PC-3 (cell line): ENCODE measurements at regions of chr1 and their contacts with region 1.

Region 1: DNA sequence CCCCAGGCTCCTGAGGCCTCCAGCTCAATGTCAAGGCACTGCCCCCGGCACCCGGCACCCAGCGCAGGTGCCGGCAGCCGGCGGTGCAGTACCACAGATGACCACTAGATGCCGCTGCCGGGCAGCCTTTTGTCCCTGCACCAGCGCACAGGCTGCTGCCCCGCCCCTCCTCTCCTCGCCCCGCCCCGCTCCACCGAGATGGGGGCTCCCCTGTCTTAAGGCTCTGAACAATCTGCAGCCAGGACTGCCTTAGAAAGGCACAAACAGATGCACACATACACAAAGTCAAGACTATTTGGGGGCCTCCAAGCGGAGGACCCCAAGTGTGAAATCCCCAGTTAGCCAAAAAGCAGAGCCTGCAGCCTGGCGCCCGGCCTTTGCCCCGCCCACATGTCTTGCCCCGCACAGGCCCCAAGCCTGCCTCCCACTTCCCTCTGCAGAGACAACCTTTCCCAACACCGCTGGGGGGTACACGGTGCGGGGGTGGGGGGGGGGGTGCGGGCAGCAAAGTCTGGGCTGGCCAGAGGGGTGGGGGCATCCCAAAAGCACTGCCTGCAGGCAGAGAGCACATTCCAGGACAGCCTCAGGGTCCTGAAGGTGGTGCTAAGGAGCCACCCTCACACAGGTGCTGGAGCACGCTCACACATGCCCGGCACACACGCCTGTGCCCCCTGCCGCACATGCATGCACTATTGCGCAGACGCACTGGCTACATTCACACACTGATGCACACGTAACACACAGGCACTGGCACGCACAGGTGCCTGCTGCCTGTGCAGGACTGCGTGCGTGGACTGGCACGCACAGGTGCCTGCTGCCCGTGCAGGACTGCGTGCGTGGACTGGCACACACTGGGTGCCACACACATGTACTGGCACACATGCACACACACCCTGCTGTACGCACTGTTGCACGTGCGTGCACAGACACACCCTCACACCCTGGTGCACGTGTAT is 37.1 kb downstream of the ARHGEF16 start:
- DNase-seq: peak; percentile 90
- ATAC-seq: peak; percentile 61
- H3K4me3 ChIP-seq: peak overlapping the region; percentile 33; the same call in 1 of the 2 replicates
- H3K27ac ChIP-seq: no peak overlapping the region
- H3K4me1 ChIP-seq: peaks cover 27% of the 10 kb centered on the region
- H3K27me3 ChIP-seq: no peaks in the 10 kb centered on the region
- CTCF ChIP-seq: peak; percentile 98

Region 2: GRCh38 chr1:3369446-3370076 is 122.0 kb before region 1 on chr1:
- CTCF ChIA-PET with region 1: no interaction called
- POLR2A ChIA-PET with region 1: no interaction called
- intact Hi-C with region 1: no loop called
- DNase-seq: peak; percentile 46
- ATAC-seq: peak; percentile 52
- H3K4me3 ChIP-seq: no peak overlapping the region
- H3K27ac ChIP-seq: no peak overlapping the region
- H3K4me1 ChIP-seq: no peaks in the 10 kb centered on the region
- H3K27me3 ChIP-seq: peaks cover 92% of the 10 kb centered on the region
- CTCF ChIP-seq: no peak

Region 3: DNA sequence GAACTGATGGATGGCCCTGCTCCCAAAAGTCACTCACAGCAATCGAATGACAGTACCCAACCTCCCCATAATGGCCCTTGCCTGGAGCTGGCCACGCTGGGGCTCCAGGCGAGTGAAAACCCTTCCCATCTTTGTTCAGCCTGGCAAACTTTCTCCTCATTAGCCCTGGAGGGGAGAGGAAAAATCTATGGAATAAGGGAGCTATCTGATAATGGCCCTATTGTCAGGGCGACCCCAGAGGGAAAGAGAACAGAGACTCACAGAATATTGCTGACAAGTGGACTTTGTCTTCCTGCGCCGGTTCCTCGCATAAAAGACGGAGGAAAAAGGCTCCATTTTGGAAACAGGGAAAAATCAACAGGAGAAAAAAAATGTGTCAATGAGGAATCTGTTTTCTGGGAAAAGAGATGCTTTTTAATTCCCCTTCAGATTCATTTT is 50.1 kb before region 1 on chr1:
- CTCF ChIA-PET with region 1: no interaction called
- POLR2A ChIA-PET with region 1: no interaction called
- intact Hi-C with region 1: no loop called
- DNase-seq: no peak
- ATAC-seq: no peak
- H3K4me3 ChIP-seq: no peak overlapping the region
- H3K27ac ChIP-seq: no peak overlapping the region
- H3K4me1 ChIP-seq: peaks cover 12% of the 10 kb centered on the region
- H3K27me3 ChIP-seq: peaks cover 56% of the 10 kb centered on the region
- CTCF ChIP-seq: no peak

Region 4: DNA sequence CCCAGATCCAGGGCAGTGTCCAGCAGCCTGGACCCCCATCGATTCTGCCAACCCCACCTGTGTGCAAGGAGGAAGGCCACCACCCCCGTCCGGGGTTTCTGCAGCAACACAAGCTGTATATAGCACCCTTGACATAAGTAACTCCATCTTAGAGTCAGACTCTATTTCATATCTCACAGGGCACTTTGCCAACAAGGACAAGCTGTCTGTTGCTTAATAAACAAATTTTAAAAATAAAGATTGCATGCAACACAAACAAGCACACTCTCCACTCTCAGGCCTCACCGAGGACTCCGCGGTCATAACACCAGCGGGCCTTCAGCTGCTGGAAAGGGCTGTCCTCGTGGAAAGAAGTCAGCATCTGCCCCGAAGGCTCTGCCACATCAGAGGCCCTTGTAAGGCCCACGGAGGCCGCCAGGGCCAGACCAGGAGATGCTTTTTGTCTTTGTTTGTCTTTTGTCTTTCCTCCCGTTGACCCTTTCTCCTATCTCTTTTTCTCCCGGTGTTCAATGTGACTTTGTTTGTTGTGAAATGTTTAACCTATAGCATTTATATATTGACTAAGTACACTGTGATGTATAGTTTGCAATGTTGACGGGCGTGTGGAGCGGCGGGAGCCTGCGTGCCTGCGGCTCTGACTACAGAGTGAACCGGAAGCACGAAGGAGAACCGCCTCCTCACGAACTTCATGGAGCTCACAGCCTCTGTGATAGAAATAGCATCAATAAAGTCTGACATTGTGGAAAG is 95.5 kb after region 1 on chr1:
- CTCF ChIA-PET with region 1: interaction called, 4 read pairs
- POLR2A ChIA-PET with region 1: no interaction called
- intact Hi-C with region 1: loop called (anchors 1 kb)
- DNase-seq: peak; percentile 97
- ATAC-seq: peak; percentile 98
- H3K4me3 ChIP-seq: no peak overlapping the region
- H3K27ac ChIP-seq: peak overlapping the region; percentile 28
- H3K4me1 ChIP-seq: peaks cover 10% of the 10 kb centered on the region
- H3K27me3 ChIP-seq: no peaks in the 10 kb centered on the region
- CTCF ChIP-seq: no peak